ENCODE measurements at regions of chr2 and their contacts with region 1.

Region 1: GRCh38 chr2:42216712-42217111 is 47.6 kb downstream of the EML4 start:
- DNase-seq: no peak
- ATAC-seq: no peak
- H3K4me3 ChIP-seq: no peak overlapping the region
- H3K27ac ChIP-seq: no peak overlapping the region
- H3K4me1 ChIP-seq: no peaks in the 10 kb centered on the region
- H3K27me3 ChIP-seq: no peaks in the 10 kb centered on the region
- CTCF ChIP-seq: no peak
- EP300 ChIP-seq: no peak
- POLR2A ChIP-seq: no peak
- RAD21 ChIP-seq: no peak

Region 2: GRCh38 chr2:41863062-41863461 is 353.6 kb before region 1 on chr2:
- CTCF ChIA-PET with region 1: no interaction called
- POLR2A ChIA-PET with region 1: no interaction called
- RAD21 ChIA-PET with region 1: no interaction called
- SMC1A ChIA-PET with region 1: no interaction called
- in situ Hi-C with region 1: no loop called
- intact Hi-C with region 1: no loop called
- DNase-seq: no peak
- ATAC-seq: no peak
- H3K4me3 ChIP-seq: no peak overlapping the region
- H3K27ac ChIP-seq: no peak overlapping the region
- H3K4me1 ChIP-seq: no peaks in the 10 kb centered on the region
- H3K27me3 ChIP-seq: no peaks in the 10 kb centered on the region; a peak in 1 of 4 replicates
- CTCF ChIP-seq: no peak
- EP300 ChIP-seq: no peak
- POLR2A ChIP-seq: no peak
- RAD21 ChIP-seq: no peak

Region 3: DNA sequence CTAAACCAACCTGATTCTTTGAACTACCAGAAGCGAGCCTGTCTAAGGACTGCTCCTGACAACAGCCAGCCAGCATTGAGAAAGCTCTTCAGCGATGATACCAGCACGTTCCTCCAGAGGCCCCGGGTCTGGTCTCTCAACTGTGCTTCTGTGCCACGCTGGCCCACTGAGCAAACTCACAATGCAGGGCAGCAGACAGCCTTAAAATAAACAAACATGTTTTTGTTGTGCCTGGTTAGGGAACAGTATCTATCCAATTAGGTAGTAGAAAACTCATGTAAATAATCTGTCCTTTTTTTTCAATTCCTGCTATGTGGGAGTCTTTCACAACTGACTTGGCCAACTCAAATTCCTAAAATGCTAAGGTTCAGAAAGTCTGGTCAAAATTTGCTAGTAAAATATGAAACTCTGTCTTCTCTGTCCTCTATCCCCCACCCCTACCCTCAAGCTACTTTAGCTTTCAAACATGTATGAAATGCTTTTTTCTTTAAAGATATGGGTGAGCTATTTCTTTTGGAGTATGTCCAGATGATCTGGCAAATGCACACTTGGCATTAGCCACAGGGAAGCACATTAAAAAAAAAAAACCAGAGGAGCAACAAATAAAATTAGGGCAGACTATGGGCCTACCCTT is 69.0 kb before region 1 on chr2:
- CTCF ChIA-PET with region 1: no interaction called
- POLR2A ChIA-PET with region 1: interaction called, 10 read pairs
- RAD21 ChIA-PET with region 1: no interaction called
- SMC1A ChIA-PET with region 1: no interaction called
- in situ Hi-C with region 1: no loop called
- intact Hi-C with region 1: no loop called
- DNase-seq: no peak
- ATAC-seq: no peak
- H3K4me3 ChIP-seq: no peak overlapping the region
- H3K27ac ChIP-seq: no peak overlapping the region
- H3K4me1 ChIP-seq: no peaks in the 10 kb centered on the region
- H3K27me3 ChIP-seq: no peaks in the 10 kb centered on the region
- CTCF ChIP-seq: no peak
- EP300 ChIP-seq: no peak
- POLR2A ChIP-seq: no peak
- RAD21 ChIP-seq: no peak

Region 4: DNA sequence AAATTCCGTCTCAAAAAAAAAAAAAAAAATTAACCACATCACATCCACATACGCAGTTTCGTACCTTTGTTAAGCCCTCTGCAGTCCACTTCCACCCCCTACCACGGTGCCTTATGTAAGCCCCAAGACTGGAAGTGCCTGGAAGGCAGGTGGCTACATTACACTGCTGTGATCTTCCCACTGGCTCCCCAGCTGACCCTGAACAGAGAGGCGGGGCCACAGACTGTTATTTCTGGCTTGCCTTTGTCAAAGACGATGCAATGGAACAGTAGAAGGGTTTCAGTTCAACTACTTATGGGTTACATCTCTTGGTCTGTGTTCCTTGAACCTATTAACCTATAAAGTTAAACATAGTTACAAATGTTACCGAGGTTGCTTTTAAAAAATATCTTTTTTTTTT is 160.0 kb after region 1 on chr2:
- CTCF ChIA-PET with region 1: no interaction called
- POLR2A ChIA-PET with region 1: no interaction called
- RAD21 ChIA-PET with region 1: no interaction called
- SMC1A ChIA-PET with region 1: no interaction called
- in situ Hi-C with region 1: no loop called
- intact Hi-C with region 1: no loop called
- DNase-seq: no peak
- ATAC-seq: peak; percentile 69
- H3K4me3 ChIP-seq: no peak overlapping the region
- H3K27ac ChIP-seq: no peak overlapping the region
- H3K4me1 ChIP-seq: no peaks in the 10 kb centered on the region
- H3K27me3 ChIP-seq: no peaks in the 10 kb centered on the region
- CTCF ChIP-seq: no peak
- EP300 ChIP-seq: no peak
- POLR2A ChIP-seq: no peak
- RAD21 ChIP-seq: no peak